Sigmoid colon (tissue), 7 donors: ENCODE measurements at regions of chr9 and their contacts with region 1.

Region 1: DNA sequence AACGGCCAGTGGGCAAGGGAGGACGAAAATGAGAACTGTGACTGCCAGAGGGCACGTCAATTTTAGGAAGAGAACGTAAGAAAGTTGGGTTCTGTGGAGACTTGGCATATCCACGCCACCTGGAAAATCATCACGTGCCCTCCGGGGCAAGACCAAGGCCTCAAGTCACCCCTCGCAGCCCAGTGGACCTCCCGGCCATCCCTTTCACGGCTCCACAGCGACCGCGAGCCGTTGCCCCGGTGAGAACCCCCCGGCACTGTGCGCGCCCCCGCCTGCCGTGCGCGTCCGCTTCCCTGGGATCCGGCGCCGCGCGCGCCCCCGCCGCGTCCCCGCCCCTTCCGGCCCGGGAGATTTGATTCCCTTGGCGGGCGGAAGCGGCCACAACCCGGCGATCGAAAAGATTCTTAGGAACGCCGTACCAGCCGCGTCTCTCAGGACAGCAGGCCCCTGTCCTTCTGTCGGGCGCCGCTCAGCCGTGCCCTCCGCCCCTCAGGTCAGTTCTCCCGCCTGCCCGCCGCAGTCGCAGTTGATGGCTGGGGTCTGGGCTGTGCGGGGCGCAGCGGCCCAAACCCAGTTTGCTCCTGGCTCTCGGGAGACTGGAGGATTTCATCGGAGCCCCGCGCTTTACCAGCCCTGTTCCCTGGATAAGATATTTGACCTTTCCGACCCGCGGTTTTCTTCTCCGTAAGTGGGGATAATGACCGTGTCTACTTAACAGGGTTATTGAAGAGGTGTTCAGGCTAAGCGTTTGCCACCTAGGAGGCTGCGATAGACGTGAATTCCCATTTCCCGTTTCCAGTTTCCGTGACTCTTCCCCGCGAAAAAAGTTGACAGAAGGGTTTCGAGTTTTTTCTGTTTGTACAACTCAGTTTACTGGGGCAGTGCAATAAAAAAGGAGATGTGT is at the start of gene MELK:
- DNase-seq: peak; percentile 81
- H3K4me3 ChIP-seq: peak within 1 kb of the TSS; percentile 49 to 86 (median 76)
- H3K27ac ChIP-seq: peak within 1 kb of the TSS; percentile 44 to 75 (median 70)
- H3K4me1 ChIP-seq: peaks cover 0 to 27% (median 16%) of the 10 kb centered on the region in 4 donors
- H3K27me3 ChIP-seq: no peaks in the 10 kb centered on the region
- CTCF ChIP-seq: no peak
- EP300 ChIP-seq: no peak
- POLR2A ChIP-seq: no peak
- total RNA-seq, gene MELK: 1.2 TPM in 1 of 4 donors, not detected in the others

Region 2: DNA sequence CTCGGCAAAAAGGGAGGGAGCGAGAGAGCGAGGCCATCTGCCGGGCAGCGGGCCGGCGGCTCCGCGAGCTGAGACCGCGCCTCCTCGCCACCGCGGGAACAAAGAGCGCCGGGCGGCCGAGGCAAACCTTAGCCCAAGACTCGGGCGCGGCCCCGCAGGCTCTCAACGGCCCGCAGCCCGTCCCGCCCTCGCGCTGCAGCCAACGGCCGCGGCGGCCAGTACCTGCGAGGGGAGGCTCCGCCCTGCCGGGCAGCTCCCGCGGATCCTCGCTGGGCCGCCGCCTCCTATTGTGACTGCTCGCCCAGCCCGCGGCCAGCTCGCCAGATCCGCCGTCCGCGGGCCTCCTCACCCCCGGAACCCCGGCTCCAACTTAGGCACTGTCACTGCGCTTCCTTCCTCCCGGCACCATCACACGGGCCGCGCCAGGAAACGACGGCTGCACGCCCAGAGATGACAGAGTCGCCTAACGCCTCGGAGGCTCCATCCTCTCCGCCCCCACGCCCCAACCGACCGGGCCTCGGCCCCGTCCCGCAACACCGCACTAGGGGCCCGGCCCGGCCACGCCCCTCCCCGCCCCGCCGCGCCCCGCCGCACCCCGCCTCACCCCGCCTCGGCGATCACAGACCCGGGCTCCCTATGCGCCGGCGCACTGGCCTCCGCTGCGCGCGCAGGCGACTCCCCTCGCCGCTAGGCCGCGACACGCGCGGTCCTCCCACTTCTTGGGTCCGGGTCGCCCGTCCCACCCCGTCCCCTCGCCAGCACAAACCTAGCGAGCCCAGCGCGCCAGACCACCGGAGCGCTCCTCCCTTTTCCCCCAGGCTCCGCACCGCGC is 172.2 kb before region 1 on chr9:
- intact Hi-C with region 1: loop called (anchors 5 kb)
- DNase-seq: peak; percentile 93
- H3K4me3 ChIP-seq: peak overlapping the region; percentile 81 to 88 (median 86)
- H3K27ac ChIP-seq: peak overlapping the region; percentile 94 to 98 (median 96)
- H3K4me1 ChIP-seq: peaks cover 0 to 35% (median 26%) of the 10 kb centered on the region in 4 donors
- H3K27me3 ChIP-seq: no peaks in the 10 kb centered on the region
- CTCF ChIP-seq: no peak
- EP300 ChIP-seq: no peak
- POLR2A ChIP-seq: peak in 1 of 2 donors; percentile 28

Region 3: GRCh38 chr9:36487482-36488388 is 85.0 kb before region 1 on chr9:
- intact Hi-C with region 1: loop called (anchors 5 kb)
- DNase-seq: peak; percentile 95
- H3K4me3 ChIP-seq: peak overlapping the region; percentile 36 to 100 (median 92)
- H3K27ac ChIP-seq: peak overlapping the region; percentile 90 to 94 (median 92)
- H3K4me1 ChIP-seq: peaks cover 0 to 33% (median 27%) of the 10 kb centered on the region in 4 donors
- H3K27me3 ChIP-seq: no peaks in the 10 kb centered on the region
- CTCF ChIP-seq: peak in 1 of 4 experiments; percentile 21
- EP300 ChIP-seq: no peak
- POLR2A ChIP-seq: peak; percentile 56 to 60

Region 4: DNA sequence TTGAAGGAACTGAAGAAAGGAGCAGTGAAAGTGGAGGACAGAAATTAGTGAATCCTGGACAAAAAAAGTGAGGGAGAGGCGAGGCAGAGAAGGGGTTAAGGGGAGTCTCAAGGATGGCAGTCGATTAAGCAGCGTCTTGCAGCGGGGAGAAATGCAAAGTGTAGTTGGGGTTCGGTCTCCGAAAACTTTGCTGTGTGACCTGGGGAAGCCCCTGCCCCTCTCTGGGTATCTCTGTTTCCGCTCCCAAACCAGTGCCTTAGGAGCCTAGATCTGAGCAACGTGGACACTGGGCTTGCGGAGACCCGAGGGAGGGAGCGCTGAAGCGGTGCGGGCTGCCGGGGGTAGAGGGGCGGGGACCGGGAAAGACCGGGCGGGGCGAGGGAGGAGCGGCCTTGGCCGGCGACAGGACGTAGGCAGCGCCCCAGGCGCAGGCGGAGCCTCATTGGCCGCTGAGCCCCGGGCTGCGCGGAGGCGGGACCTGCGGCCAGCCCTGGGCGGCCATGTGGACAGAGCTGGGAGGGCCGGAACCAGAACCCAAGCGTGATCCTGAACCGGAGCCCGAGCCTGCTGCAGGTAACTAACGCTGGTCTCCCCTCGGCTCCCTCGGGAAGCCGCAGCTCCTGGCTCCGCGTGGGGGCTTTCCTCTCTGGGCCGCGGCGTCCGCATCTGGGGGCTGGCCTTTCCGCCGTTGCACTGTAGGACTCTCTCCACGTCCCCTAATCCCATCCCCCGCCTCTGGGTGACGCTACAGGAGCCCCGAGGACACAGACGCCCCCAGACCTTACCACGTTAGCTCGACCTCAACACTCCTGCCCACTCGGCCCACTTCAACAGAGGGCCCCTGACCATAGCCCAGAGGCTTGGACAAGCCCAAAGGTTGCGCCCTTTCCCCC is 1819.7 kb after region 1 on chr9 and contains the start of gene ALDH1B1:
- intact Hi-C with region 1: loop called (anchors 10 kb)
- DNase-seq: peak; percentile 93
- H3K4me3 ChIP-seq: peak within 1 kb of the TSS; percentile 64 to 88 (median 72)
- H3K27ac ChIP-seq: peak within 1 kb of the TSS; percentile 84 to 97 (median 88)
- H3K4me1 ChIP-seq: peaks cover 0 to 84% (median 59%) of the 10 kb centered on the region in 4 donors
- H3K27me3 ChIP-seq: no peaks in the 10 kb centered on the region
- CTCF ChIP-seq: no peak
- EP300 ChIP-seq: peak in 1 of 4 donors; percentile 7
- POLR2A ChIP-seq: peak; percentile 65 to 75
- total RNA-seq, gene ALDH1B1: 35.7 to 162 (median 101) TPM